Activated T-helper 1 cell treated with anti-CD3 and anti-CD28 coated beads, Interleukin-12 subunit alpha, Interleukin-12 subunit beta, Interleukin-2, Interleukin-4 antibody, amounts not matched to agents 30 ng/mL and 10 ng/mL and 1 ng/mL, durations not matched to agents 14 hours and 24 hours and 36 hours (primary cell): ENCODE measurements at regions of chr13 and their contacts with region 1.

Region 1: DNA sequence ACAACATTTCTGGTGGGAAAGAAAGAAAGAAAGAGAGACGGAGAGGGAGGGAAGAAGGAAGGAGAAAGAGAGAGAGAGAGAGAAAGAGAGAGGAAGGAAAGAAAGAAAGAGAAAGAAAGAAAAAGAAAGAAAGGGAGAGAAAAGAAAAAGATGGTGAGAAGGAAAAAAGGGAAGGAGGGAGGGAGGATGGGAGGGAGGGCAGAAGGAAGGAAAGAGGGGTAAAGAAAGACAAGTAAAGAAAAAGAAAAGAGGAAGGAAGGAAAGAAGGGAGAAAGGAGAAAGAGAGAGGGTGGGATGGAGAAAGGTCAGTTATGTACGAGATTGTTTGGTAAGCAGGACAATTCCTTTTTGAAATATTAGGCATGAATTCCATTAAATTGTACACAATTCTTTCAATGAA is 145.3 kb downstream of the SPRY2 start:
- DNase-seq: no peak
- H3K4me3 Mint-ChIP-seq: no peak overlapping the region
- H3K27ac Mint-ChIP-seq: no peak overlapping the region
- H3K4me1 Mint-ChIP-seq: no peaks in the 10 kb centered on the region
- H3K27me3 Mint-ChIP-seq: no peaks in the 10 kb centered on the region

Region 2: GRCh38 chr13:80173224-80173623 is 22.4 kb before region 1 on chr13:
- intact Hi-C with region 1: loop called (anchors 1 kb)
- DNase-seq: no peak
- H3K4me3 Mint-ChIP-seq: no peak overlapping the region
- H3K27ac Mint-ChIP-seq: no peak overlapping the region
- H3K4me1 Mint-ChIP-seq: no peaks in the 10 kb centered on the region
- H3K27me3 Mint-ChIP-seq: peaks cover 1% of the 10 kb centered on the region

Region 3: GRCh38 chr13:80214521-80214991 is 18.9 kb after region 1 on chr13:
- intact Hi-C with region 1: no loop called
- DNase-seq: no peak
- H3K4me3 Mint-ChIP-seq: no peak overlapping the region
- H3K27ac Mint-ChIP-seq: no peak overlapping the region
- H3K4me1 Mint-ChIP-seq: no peaks in the 10 kb centered on the region
- H3K27me3 Mint-ChIP-seq: no peaks in the 10 kb centered on the region

Region 4: DNA sequence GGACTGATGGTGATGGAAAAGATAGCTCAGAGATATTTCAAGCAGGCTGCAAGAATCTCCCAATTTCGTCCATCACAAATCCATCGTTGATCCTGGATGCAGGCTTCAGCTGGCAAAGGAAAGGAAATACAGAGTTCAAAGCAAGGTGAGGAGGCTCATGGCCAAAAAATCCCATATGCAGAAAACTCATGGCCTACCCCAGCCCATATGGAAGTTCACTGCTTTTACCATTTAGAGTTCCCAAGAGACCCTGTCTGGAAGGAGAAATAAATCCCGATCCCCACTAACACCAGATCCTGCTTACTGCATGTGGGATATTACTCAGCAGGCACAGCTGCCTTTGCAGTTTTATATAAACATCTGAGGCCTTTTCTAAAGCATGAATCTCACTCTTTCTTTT is 558.2 kb after region 1 on chr13:
- intact Hi-C with region 1: no loop called
- DNase-seq: no peak
- H3K4me3 Mint-ChIP-seq: no peak overlapping the region
- H3K27ac Mint-ChIP-seq: no peak overlapping the region
- H3K4me1 Mint-ChIP-seq: no peaks in the 10 kb centered on the region
- H3K27me3 Mint-ChIP-seq: no peaks in the 10 kb centered on the region